Breast epithelium (tissue), 4 donors: ENCODE measurements at regions of chr5 and their contacts with region 1.

Region 1: DNA sequence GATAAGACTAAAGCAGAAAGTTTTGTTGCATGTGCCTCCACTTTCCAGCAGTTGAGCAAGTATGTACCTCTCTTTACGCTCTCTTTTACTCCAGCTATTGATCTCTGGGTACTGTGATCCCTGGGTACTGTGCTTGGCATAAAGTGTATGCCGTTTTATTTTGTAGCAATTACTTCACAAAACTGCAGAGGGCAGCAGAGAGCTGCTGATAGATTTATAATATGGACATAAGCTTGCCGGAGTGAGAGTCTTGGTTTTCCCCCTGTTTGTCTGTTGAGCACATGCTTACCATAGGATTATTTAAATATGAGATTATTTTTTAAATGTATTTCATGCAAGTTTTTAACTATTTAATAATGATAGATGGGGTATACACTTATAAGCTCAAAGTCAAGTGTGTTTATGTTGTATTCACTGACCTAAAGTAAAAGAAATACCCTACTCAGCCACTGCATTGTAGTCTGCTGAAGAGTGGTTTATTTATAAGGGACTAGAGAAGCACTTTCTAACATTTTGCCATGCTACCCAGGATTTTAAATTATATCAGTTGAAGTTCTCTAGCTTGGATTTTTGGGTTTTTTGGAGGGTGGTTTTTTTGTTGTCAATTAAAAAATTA is 13.0 kb downstream of the TTC1 start:
- DNase-seq: no peak
- H3K4me3 ChIP-seq: no peak overlapping the region
- H3K27ac ChIP-seq: no peak overlapping the region
- H3K4me1 ChIP-seq: no peaks in the 10 kb centered on the region
- H3K27me3 ChIP-seq: no peaks in the 10 kb centered on the region
- CTCF ChIP-seq: peak; percentile 76 to 82 (median 79)
- POLR2A ChIP-seq: no peak

Region 2: DNA sequence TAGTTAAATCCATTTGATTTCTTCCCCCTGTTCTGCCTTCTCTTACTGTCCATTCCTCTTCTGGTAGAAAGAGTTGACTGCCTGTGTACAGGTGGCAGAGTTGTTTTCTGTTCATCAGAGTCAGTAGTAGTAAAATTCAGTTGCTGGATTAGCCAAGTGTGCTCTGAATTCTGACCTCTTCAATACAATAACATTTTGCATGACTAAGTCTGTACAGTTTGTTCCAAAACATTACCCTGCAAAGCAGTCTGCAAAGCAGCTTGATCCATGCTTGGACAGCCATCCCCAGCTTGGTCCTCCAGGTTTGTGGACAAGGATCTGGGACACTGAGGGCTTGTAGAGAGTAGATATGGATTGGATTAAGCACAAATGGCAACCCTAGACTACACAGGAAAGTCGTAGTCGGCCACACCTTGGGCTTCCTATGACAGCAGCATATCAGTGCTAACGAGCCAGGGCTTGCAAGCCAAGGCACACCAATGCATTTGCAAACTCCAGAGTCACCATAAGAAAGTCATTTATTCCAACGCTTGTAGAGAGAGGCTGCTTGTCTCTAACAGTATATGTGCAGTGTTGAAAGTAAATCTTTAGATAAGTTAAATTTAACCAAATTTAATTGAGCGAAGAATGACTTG is 716.9 kb before region 1 on chr5:
- intact Hi-C with region 1: no loop called
- DNase-seq: no peak
- H3K4me3 ChIP-seq: no peak overlapping the region
- H3K27ac ChIP-seq: no peak overlapping the region
- H3K4me1 ChIP-seq: no peaks in the 10 kb centered on the region
- H3K27me3 ChIP-seq: no peaks in the 10 kb centered on the region
- CTCF ChIP-seq: no peak
- POLR2A ChIP-seq: no peak

Region 3: GRCh38 chr5:160071516-160071915 is 49.6 kb after region 1 on chr5:
- intact Hi-C with region 1: loop called (anchors 10 kb)
- DNase-seq: no peak
- H3K4me3 ChIP-seq: no peak overlapping the region
- H3K27ac ChIP-seq: peak overlapping the region in 1 of 2 donors; percentile 13
- H3K4me1 ChIP-seq: no peaks in the 10 kb centered on the region
- H3K27me3 ChIP-seq: no peaks in the 10 kb centered on the region
- CTCF ChIP-seq: no peak
- POLR2A ChIP-seq: no peak

Region 4: GRCh38 chr5:160342403-160342941 is 320.5 kb after region 1 on chr5:
- intact Hi-C with region 1: loop called (anchors 10 kb)
- DNase-seq: no peak
- H3K4me3 ChIP-seq: no peak overlapping the region
- H3K27ac ChIP-seq: no peak overlapping the region
- H3K4me1 ChIP-seq: no peaks in the 10 kb centered on the region
- H3K27me3 ChIP-seq: no peaks in the 10 kb centered on the region
- CTCF ChIP-seq: no peak
- POLR2A ChIP-seq: no peak